Caco-2 (cell line): ENCODE measurements at regions of chr6 and their contacts with region 1.

Region 1: DNA sequence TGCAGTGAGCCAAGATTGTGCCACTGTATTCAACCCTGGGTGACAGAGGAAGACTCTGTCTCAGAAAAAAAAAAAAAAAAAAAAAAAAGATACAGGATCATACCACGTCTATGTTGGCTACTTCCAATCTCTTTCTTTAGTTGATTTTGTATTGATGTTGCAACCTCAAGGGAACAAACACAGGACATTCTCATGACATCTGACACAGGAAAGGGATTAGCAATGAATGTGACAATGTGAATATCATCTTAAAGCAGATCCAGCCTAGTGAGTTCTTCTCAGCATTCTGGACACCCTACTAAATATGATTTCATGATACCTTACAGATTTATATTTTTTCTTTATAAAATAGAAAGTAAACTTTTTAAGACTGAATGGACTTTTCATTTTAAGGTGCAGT is 580.3 kb downstream of the PRKN start:
- DNase-seq: no peak
- H3K4me3 ChIP-seq: no peak overlapping the region
- H3K4me3 Mint-ChIP-seq: no peak overlapping the region
- H3K27ac Mint-ChIP-seq: no peak overlapping the region
- H3K4me1 ChIP-seq: no peaks in the 10 kb centered on the region
- H3K4me1 Mint-ChIP-seq: no peaks in the 10 kb centered on the region
- H3K27me3 ChIP-seq: no peaks in the 10 kb centered on the region
- H3K27me3 Mint-ChIP-seq: no peaks in the 10 kb centered on the region
- CTCF ChIP-seq: no peak

Region 2: DNA sequence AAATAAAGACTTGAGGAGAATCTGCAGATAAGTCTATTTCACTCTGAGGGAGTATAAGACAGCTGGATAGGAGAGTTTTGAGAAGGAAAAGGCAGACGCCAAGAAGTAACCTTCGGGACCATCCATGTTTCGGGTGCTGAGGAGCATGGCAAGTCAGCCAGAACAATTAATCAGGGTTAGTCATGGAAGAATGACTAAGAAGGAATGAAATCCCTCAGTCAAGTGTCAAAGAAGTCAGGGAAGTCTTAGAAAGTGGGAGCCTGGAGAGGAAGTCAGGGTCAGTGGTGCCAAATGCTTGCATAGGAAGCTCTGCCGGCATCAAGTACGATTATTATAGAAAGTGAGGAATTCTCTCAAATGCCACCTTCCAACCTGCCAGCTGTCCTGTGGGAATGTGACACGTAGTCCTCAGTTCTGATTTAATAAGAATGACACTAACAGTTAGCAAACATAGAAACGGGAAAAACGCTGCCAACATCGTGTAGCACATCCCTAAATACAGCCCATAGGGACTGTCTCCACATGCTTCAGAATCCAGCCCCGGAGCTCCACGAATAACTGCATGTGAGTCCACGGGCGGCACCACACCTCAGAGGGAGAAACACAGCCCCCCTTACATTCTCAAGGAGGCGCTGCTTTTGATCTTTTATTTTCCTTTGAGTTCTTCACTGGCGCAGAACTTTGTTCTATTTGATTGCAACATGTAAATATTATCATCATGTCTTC is 22.4 kb before region 1 on chr6:
- CTCF ChIA-PET with region 1: no interaction called
- POLR2A ChIA-PET with region 1: no interaction called
- intact Hi-C with region 1: loop called (anchors 1 kb)
- DNase-seq: no peak
- H3K4me3 ChIP-seq: no peak overlapping the region
- H3K4me3 Mint-ChIP-seq: no peak overlapping the region
- H3K27ac Mint-ChIP-seq: no peak overlapping the region
- H3K4me1 ChIP-seq: no peaks in the 10 kb centered on the region
- H3K4me1 Mint-ChIP-seq: no peaks in the 10 kb centered on the region
- H3K27me3 ChIP-seq: no peaks in the 10 kb centered on the region
- H3K27me3 Mint-ChIP-seq: peaks cover 3% of the 10 kb centered on the region
- CTCF ChIP-seq: no peak